ENCODE measurements at regions of chr17 and their contacts with region 1.

Region 1: GRCh38 chr17:59914274-59914854 is 21.4 kb downstream of the RPS6KB1 start:
- DNase-seq: no peak
- ATAC-seq: no peak

Region 2: DNA sequence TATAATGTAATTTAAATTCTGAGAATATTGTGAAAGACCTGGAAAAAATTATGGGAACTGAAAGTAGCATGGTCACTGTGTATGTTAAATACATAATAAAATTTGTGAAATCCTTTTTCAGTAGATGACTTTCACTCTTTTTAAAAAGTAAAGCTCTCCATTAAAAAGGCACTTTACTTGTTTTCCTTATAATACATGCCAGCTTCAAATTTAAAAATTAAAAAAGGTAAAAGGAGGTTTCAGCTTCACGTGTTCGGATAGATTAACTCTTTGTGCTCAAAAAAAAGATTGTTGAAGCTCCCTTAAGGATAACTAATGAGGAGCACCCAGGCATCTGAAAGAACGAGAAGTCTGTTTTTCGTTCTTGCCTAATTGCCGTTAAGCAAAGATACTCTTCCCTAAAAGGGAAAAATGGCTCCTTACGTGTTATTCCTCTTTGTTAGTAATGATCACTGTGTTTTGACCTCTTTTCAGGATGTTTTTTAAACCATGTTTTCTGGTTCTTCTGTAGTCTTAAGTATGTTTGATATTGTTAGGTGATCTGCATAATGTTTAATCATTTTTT is 109.4 kb before region 1 on chr17:
- intact Hi-C with region 1: no loop called
- DNase-seq: no peak
- ATAC-seq: peak in 1 of 2 donors; percentile 49

Region 3: GRCh38 chr17:59829217-59830006 is 85.0 kb before region 1 on chr17:
- intact Hi-C with region 1: no loop called
- DNase-seq: no peak
- ATAC-seq: peak; percentile 88 to 94

Region 4: DNA sequence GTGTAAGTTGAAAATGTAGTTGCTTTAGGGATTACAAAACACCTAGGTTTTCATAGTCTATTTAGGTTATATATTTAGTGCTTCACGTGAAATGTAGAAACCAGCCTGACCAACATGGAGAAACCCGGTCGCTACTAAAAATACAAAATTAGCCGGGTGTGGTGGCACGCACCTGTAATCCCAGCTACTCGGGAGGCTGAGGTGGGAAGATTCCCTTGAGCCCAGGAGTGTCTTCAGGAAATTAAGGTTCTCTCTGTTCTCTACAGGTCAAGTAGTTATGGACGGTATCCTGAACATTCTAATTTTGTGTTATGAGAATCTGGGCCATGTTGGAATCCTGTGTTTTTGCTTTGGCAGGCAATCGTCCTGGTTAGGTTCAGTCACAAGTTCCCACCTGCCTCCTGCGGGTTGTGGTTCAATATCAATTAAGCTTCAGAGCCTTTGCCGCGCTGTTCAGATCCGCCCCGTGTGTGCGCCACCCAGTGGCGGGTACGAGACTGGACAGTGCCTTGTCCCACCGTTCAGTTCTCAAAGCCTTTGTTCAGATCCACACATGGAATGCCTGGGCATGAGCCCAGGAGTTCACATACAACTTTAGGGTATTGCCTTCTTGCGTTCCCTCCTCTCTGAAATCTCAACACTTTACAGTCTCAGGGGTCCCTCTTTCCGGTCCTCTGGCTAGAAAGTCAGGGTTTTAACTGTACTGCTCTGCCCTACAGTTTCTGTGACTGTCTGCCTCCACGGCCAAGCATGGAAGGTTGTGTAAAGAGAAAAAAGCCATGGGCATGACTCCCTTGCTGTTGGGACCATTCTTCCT is 122.6 kb after region 1 on chr17:
- intact Hi-C with region 1: loop called in 1 of 2 experiments (anchors 10 kb)
- DNase-seq: peak; percentile 69
- ATAC-seq: peak; percentile 88

Measured in left cardiac atrium (tissue), 4 donors.